ENCODE measurements at regions of chr6 and their contacts with region 1.

Region 1: GRCh38 chr6:158644231-158645063 is at the start of gene DYNLT1:
- DNase-seq: peak; percentile 91 to 96
- H3K4me3 ChIP-seq: peak within 1 kb of the TSS; percentile 97 to 98
- H3K27ac ChIP-seq: peak within 1 kb of the TSS; percentile 92 to 99
- H3K4me1 ChIP-seq: peaks cover 0 to 57% (median 44%) of the 10 kb centered on the region in 4 donors
- H3K27me3 ChIP-seq: no peaks in the 10 kb centered on the region
- CTCF ChIP-seq: no peak

Region 2: GRCh38 chr6:158338311-158339112 is 305.9 kb before region 1 on chr6:
- intact Hi-C with region 1: no loop called
- DNase-seq: no peak
- H3K4me3 ChIP-seq: no peak overlapping the region
- H3K27ac ChIP-seq: no peak overlapping the region
- H3K4me1 ChIP-seq: peaks cover 0 to 5% (median 0%) of the 10 kb centered on the region in 4 donors
- H3K27me3 ChIP-seq: no peaks in the 10 kb centered on the region
- CTCF ChIP-seq: no peak

Region 3: GRCh38 chr6:158607411-158608170 is 36.9 kb before region 1 on chr6:
- intact Hi-C with region 1: loop called (anchors 2 kb)
- DNase-seq: no peak
- H3K4me3 ChIP-seq: no peak overlapping the region
- H3K27ac ChIP-seq: peak overlapping the region; percentile 79 to 85
- H3K4me1 ChIP-seq: peaks cover 0 to 45% (median 13%) of the 10 kb centered on the region in 4 donors
- H3K27me3 ChIP-seq: no peaks in the 10 kb centered on the region
- CTCF ChIP-seq: no peak